Activated T-helper 1 cell treated with anti-CD3 and anti-CD28 coated beads, Interleukin-12 subunit alpha, Interleukin-12 subunit beta, Interleukin-2, Interleukin-4 antibody, amounts not matched to agents 30 ng/mL and 10 ng/mL and 1 ng/mL, durations not matched to agents 14 hours and 24 hours and 36 hours (primary cell): ENCODE measurements at regions of chr1 and their contacts with region 1.

Region 1: GRCh38 chr1:169012416-169012815 is 94.1 kb upstream of the ATP1B1 start:
- DNase-seq: no peak
- H3K4me3 Mint-ChIP-seq: no peak overlapping the region
- H3K27ac Mint-ChIP-seq: peak overlapping the region; percentile 11
- H3K4me1 Mint-ChIP-seq: peaks cover 22% of the 10 kb centered on the region
- H3K27me3 Mint-ChIP-seq: no peaks in the 10 kb centered on the region

Region 2: DNA sequence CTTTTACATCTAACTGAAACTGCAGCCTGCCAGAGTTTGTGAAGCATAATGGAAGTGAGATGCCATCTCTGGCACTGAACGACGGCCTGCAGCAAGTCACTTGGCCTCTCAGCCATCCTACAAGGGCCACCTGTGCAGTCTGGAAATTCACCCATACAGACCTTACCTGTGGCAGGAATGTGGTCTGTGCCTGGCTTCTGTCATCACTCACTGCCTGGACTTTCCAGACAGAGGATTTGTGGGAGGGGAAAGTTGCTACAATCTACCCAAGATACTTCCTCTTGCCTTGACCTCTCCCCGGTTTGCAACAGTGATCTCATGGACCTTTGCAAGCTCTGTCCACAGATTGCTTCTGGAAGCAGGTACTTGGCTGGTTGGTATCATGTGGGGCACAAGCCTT is 35.6 kb after region 1 on chr1:
- intact Hi-C with region 1: loop called (anchors 2 kb)
- DNase-seq: no peak
- H3K4me3 Mint-ChIP-seq: peak overlapping the region; percentile 23
- H3K27ac Mint-ChIP-seq: peak overlapping the region; percentile 69
- H3K4me1 Mint-ChIP-seq: peaks cover 73% of the 10 kb centered on the region
- H3K27me3 Mint-ChIP-seq: no peaks in the 10 kb centered on the region